ENCODE measurements at regions of chr5 and their contacts with region 1.

Region 1: DNA sequence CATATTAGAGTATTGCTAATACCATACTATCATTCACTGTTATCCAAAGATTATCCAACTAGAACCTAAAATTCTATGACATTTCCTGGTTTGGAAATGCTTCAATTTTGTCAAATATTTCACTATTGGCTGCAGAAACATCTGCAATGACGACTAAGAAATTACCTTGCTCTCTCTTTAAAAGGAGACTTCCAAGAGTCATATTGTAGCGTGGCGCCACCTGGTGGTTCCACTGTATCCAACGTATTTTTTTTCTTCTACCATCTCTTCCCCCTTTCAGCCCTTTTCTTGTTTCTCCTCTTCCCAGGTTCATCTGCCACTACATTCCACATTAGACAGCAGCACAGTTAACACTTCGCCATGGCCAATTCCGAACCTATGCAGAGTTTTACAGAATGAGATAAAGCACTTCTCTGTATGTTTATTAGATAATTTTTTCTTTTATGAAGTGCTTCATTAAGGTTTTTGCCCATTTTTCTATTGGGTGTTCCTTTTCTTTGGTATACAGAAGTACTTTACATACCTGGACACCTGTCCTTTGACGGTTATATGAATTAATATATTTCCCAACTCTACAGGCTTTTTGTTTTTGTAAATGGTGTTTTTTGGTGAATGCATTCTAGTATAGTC is 153.5 kb downstream of the CDC42SE2 start:
- DNase-seq: peak; percentile 72 to 75
- H3K4me3 ChIP-seq: no peak overlapping the region
- H3K4me3 Mint-ChIP-seq: no peak overlapping the region
- H3K27ac Mint-ChIP-seq: no peak overlapping the region
- H3K4me1 ChIP-seq: no peaks in the 10 kb centered on the region
- H3K4me1 Mint-ChIP-seq: no peaks in the 10 kb centered on the region
- H3K27me3 ChIP-seq: no peaks in the 10 kb centered on the region
- H3K27me3 Mint-ChIP-seq: no peaks in the 10 kb centered on the region
- CTCF ChIP-seq: peak; percentile 76

Region 2: GRCh38 chr5:130605234-130605633 is 812.1 kb before region 1 on chr5:
- CTCF ChIA-PET with region 1: no interaction called
- POLR2A ChIA-PET with region 1: no interaction called
- intact Hi-C with region 1: no loop called
- DNase-seq: no peak
- H3K4me3 ChIP-seq: no peak overlapping the region
- H3K4me3 Mint-ChIP-seq: no peak overlapping the region
- H3K27ac Mint-ChIP-seq: no peak overlapping the region
- H3K4me1 ChIP-seq: no peaks in the 10 kb centered on the region
- H3K4me1 Mint-ChIP-seq: no peaks in the 10 kb centered on the region
- H3K27me3 ChIP-seq: no peaks in the 10 kb centered on the region
- H3K27me3 Mint-ChIP-seq: no peaks in the 10 kb centered on the region
- CTCF ChIP-seq: no peak

Region 3: DNA sequence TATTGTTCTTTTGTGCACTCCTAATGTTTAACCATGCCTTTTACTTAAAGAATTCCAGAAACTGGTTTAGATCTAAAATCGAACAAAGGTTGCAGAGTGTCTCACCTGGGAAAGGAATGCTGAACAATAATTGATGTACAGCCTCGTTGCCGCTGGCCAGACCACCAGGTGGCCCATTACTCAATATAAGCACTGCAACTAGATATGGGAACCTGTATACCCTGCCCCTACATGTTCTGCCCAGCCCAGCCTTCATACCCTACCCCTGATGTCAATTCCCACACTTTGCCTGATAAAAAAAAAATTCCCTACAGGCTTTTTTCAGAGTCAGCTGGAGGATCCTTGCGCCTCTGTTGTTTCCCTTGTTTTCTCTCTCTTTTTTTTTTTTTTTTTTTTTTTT is 266.1 kb before region 1 on chr5:
- CTCF ChIA-PET with region 1: no interaction called
- POLR2A ChIA-PET with region 1: no interaction called
- intact Hi-C with region 1: loop called (anchors 1 kb)
- DNase-seq: no peak
- H3K4me3 ChIP-seq: no peak overlapping the region
- H3K4me3 Mint-ChIP-seq: no peak overlapping the region
- H3K27ac Mint-ChIP-seq: no peak overlapping the region
- H3K4me1 ChIP-seq: no peaks in the 10 kb centered on the region
- H3K4me1 Mint-ChIP-seq: no peaks in the 10 kb centered on the region
- H3K27me3 ChIP-seq: no peaks in the 10 kb centered on the region
- H3K27me3 Mint-ChIP-seq: no peaks in the 10 kb centered on the region
- CTCF ChIP-seq: no peak

Region 4: GRCh38 chr5:131165119-131165727 is 252.1 kb before region 1 on chr5 and contains the start of gene HINT1:
- CTCF ChIA-PET with region 1: no interaction called
- POLR2A ChIA-PET with region 1: no interaction called
- intact Hi-C with region 1: loop called (anchors 1 kb)
- DNase-seq: peak; percentile 94 to 97
- H3K4me3 ChIP-seq: peak within 1 kb of the TSS; percentile 100
- H3K4me3 Mint-ChIP-seq: peak within 1 kb of the TSS; percentile 70
- H3K27ac Mint-ChIP-seq: peak within 1 kb of the TSS; percentile 26
- H3K4me1 ChIP-seq: peaks cover 9% of the 10 kb centered on the region
- H3K4me1 Mint-ChIP-seq: peaks cover 21% of the 10 kb centered on the region
- H3K27me3 ChIP-seq: no peaks in the 10 kb centered on the region
- H3K27me3 Mint-ChIP-seq: no peaks in the 10 kb centered on the region
- CTCF ChIP-seq: peak in 1 of 2 experiments; percentile 39
- total RNA-seq, gene HINT1: 228 and 243 TPM in 2 replicates

Measured in Caco-2 (cell line).